A673 (cell line): ENCODE measurements at regions of chrX and their contacts with region 1.

Region 1: GRCh38 chrX:128816919-128817318 is 706.4 kb downstream of the SMARCA1 start:
- DNase-seq: peak; percentile 37
- H3K4me3 ChIP-seq: no peak overlapping the region
- H3K27ac ChIP-seq: no peak overlapping the region
- H3K4me1 ChIP-seq: no peaks in the 10 kb centered on the region
- H3K27me3 ChIP-seq: no peaks in the 10 kb centered on the region
- CTCF ChIP-seq: peak; percentile 67

Region 2: GRCh38 chrX:128975745-128976144 is 158.8 kb after region 1 on chrX:
- CTCF ChIA-PET with region 1: interaction called, 4 read pairs
- POLR2A ChIA-PET with region 1: no interaction called
- intact Hi-C with region 1: loop called (anchors 1 kb)
- DNase-seq: peak; percentile 54
- H3K4me3 ChIP-seq: no peak overlapping the region
- H3K27ac ChIP-seq: no peak overlapping the region
- H3K4me1 ChIP-seq: no peaks in the 10 kb centered on the region
- H3K27me3 ChIP-seq: no peaks in the 10 kb centered on the region
- CTCF ChIP-seq: peak; percentile 79